AG04450 (cell line): ENCODE measurements at regions of chr1 and their contacts with region 1.

Region 1: DNA sequence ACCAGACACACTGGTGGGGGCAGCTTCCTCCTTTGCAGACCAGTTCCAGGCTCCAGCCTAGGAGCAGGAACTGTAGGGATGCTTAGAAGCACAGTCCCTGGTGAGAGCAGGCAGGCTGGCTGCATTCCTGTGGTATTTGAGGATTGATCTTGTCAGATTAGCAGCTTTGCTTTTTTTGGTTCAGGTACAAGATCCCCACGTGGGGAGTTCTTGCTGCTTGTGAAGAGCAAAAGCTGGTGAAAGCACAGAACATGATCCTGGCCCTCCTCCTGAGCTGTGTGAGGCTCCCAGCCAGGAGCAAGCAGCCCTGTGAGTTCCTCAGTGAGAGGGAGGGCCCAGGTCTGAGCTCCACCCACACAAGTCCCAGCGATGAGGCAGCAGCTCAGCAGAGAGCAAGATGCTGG is 75.3 kb upstream of the ARTN start:
- DNase-seq: peak; percentile 96
- H3K4me3 ChIP-seq: no peak overlapping the region
- H3K27ac ChIP-seq: peak overlapping the region; percentile 39
- H3K27me3 ChIP-seq: no peaks in the 10 kb centered on the region
- CTCF ChIP-seq: no peak

Region 2: DNA sequence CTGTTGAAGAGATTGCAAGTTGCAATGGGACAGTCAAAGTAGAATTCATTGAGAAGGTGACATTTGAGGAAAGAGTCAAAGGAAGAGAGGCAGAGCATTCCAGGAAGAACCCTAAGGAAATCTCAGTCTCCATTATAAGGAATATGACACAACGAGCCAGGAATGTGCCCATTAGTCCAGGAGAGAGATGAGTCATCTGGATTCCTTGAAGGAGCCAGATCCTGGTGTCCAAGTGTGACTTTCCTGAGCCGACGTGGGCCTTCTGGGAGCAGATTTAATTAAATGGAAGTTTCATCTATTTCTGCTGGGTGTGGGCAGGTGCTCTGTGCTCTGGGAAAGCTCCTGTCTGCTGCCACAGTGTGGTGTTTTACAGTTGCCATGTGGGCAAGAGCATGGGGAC is 36.3 kb before region 1 on chr1:
- CTCF ChIA-PET with region 1: interaction called, 12 read pairs
- POLR2A ChIA-PET with region 1: no interaction called
- DNase-seq: peak; percentile 60
- H3K4me3 ChIP-seq: peak overlapping the region; percentile 14
- H3K27ac ChIP-seq: peak overlapping the region; percentile 82
- H3K27me3 ChIP-seq: no peaks in the 10 kb centered on the region
- CTCF ChIP-seq: no peak